H1 (cell line): ENCODE measurements at regions of chr3 and their contacts with region 1.

Region 1: GRCh38 chr3:188584162-188584529 is 430.2 kb downstream of the LPP start:
- DNase-seq: no peak
- H3K4me3 ChIP-seq: no peak overlapping the region
- H3K27ac ChIP-seq: no peak overlapping the region
- H3K4me1 ChIP-seq: peaks cover 0 to 5% (median under 1%) of the 10 kb centered on the region in 4 experiments; a peak in 1 of 7 replicates
- H3K27me3 ChIP-seq: no peaks in the 10 kb centered on the region
- CTCF ChIP-seq: no peak
- EP300 ChIP-seq: no peak
- POLR2A ChIP-seq: no peak
- RAD21 ChIP-seq: no peak

Region 2: DNA sequence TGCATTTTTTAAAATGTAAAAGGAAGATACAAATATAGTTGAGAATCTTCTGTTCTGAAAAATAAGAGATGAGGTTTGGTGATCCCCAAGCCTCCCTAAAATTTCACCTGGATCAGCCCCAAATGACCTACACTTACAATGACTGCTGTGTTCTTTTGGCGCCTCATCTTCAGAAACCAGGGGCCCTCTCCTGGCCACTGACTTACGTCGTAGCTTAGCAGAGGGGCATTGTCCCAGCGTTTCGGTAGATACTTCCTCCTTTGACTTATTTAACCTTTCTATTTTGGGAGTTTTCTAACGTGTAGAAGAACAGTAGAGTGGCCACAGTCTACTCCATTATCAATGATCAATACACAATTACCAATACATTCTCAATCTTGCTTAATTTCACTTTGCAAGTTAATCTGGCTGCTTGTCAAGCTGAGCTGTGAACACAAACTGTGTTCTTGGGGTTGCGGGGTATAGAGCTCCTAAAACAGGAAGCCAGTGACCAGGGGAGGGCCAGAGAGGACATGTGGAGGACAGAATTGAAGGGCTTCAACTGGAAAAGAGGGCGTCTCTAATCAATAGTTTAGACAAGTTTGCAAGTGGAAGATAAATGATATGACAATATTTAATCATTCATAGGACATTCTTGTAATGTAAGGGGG is 10.7 kb before region 1 on chr3:
- CTCF ChIA-PET with region 1: interaction called, 17 read pairs
- POLR2A ChIA-PET with region 1: no interaction called
- DNase-seq: no peak
- H3K4me3 ChIP-seq: no peak overlapping the region
- H3K27ac ChIP-seq: no peak overlapping the region
- H3K4me1 ChIP-seq: no peaks in the 10 kb centered on the region
- H3K27me3 ChIP-seq: no peaks in the 10 kb centered on the region
- CTCF ChIP-seq: peak; percentile 29 to 37 (median 36)
- EP300 ChIP-seq: no peak
- POLR2A ChIP-seq: no peak
- RAD21 ChIP-seq: peak; percentile 43 to 65

Region 3: DNA sequence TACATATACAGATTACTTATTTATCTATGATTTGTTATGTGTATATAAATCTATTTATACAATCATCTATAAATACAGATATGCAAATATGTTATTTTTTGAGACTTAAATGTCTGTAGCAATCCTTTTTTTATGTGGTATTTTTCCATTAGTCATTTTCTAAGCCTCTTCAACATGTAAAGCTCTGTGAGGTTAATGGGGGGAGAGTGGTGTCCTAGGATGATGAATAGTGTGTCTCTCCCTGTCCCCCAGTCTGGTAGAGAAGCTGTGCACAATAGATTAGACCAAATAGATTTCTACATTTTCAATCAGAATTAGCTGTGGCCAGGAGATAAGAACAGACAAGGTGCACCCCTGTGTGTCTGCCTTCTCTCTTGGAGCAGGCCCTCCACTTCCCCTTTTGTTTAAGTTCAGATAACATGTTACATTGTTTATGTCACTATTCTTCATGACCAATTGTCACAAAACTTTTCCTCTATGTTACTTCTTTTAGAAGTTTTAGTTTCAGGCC is 23.7 kb after region 1 on chr3:
- CTCF ChIA-PET with region 1: no interaction called
- POLR2A ChIA-PET with region 1: no interaction called
- DNase-seq: no peak
- H3K4me3 ChIP-seq: no peak overlapping the region
- H3K27ac ChIP-seq: no peak overlapping the region
- H3K4me1 ChIP-seq: no peaks in the 10 kb centered on the region
- H3K27me3 ChIP-seq: no peaks in the 10 kb centered on the region
- CTCF ChIP-seq: no peak
- EP300 ChIP-seq: no peak
- POLR2A ChIP-seq: no peak
- RAD21 ChIP-seq: no peak